OCI-LY7 (cell line): ENCODE measurements at regions of chr13 and their contacts with region 1.

Region 1: DNA sequence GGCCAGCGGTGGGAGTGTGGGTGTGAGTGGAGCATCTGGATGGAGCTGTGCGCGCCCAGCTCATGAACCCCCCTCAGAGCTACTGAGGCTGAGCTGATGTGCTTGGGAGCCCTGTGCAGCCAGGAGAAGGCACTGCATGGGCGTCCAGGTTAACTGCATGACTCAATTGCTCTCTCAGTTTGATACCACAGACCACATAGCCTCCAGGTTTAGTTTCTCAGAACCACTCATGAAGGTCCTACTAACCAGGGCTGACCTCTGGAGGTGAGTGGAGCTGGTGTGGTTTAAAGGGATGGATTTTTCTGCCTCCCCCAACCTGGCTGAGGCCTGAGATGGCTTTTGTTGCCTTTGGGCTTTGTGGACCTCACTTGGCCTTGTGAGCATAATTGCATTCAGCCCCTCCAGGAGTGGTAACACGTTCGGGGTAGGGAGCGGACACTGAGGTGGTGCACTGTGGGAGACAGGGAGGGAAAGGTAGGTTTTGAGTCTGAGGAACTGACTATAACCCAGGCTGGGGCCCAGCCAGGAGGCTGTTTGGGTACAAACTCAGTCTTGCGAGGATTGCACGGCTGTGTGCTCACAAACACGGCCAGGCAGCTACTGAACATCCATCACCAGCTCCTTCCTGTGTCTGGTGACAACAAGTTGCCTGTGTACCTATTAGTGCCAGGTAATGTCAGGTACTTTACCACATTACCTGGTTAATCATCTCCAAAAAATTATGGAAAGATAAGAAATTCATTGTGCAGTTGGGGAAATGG is 97.5 kb downstream of the RGCC start:
- DNase-seq: peak; percentile 89
- H3K4me3 ChIP-seq: peak overlapping the region; percentile 32
- H3K27ac ChIP-seq: peak overlapping the region; percentile 77
- H3K4me1 ChIP-seq: peaks cover 46% of the 10 kb centered on the region
- CTCF ChIP-seq: 0 out of 2 replicates have a peak, but pooled peaks have one; percentile 21

Region 2: GRCh38 chr13:41565221-41565620 is 10.4 kb after region 1 on chr13:
- CTCF ChIA-PET with region 1: no interaction called
- POLR2A ChIA-PET with region 1: interaction called, 11 read pairs
- intact Hi-C with region 1: no loop called
- DNase-seq: no peak
- H3K4me3 ChIP-seq: no peak overlapping the region
- H3K27ac ChIP-seq: no peak overlapping the region
- H3K4me1 ChIP-seq: peaks cover 7% of the 10 kb centered on the region
- CTCF ChIP-seq: no peak

Region 3: GRCh38 chr13:41590643-41591042 is 35.8 kb after region 1 on chr13:
- CTCF ChIA-PET with region 1: no interaction called
- POLR2A ChIA-PET with region 1: interaction called, 4 read pairs
- intact Hi-C with region 1: loop called (anchors 2 kb)
- DNase-seq: peak; percentile 93
- H3K4me3 ChIP-seq: peak overlapping the region; percentile 39
- H3K27ac ChIP-seq: peak overlapping the region; percentile 85
- H3K4me1 ChIP-seq: peaks cover 41% of the 10 kb centered on the region
- CTCF ChIP-seq: no peak